H1 (cell line): ENCODE measurements at regions of chr12 and their contacts with region 1.

Region 1: GRCh38 chr12:6039894-6040568 is 84.4 kb downstream of the VWF start:
- DNase-seq: peak in 1 of 2 experiments; percentile 69
- H3K4me3 ChIP-seq: no peak overlapping the region
- H3K27ac ChIP-seq: no peak overlapping the region
- H3K4me1 ChIP-seq: peaks cover 0 to 4% (median 2%) of the 10 kb centered on the region in 4 experiments; a peak in 4 of 7 replicates
- H3K27me3 ChIP-seq: peaks cover 0 to 2% (median 0%) of the 10 kb centered on the region in 4 experiments; a peak in 2 of 7 replicates
- CTCF ChIP-seq: peak; percentile 72 to 94 (median 85)
- EP300 ChIP-seq: no peak
- POLR2A ChIP-seq: no peak
- RAD21 ChIP-seq: peak; percentile 97 to 98

Region 2: DNA sequence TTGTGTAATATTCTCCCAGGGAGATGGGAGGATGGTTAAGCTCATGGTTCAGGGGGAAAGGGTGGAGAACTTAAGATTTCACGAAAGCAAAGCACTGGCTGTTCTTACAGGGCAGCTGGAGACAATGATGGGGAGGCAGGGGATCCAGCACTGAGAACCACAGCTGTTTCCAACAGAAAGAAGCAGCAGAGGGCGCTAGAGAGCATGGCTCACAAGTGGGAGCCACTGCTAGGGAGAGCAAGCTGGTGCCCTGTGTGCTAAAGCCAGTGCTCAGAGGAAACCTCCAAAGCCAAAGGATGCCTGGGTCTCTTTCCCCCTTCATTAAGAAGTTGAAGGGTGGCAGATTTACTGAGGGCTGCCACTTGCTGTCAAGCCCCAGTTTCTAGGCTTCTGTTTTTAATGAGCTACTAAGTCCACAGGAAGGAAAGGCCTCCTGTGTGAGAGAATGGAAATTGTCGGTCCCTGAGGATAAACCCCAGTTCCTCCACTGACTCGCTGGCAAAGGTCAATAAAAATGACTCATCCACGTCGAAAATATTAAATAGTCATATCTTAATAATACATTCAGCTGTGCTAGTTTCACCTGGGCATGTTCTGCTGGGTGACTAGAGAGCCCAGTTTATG is 294.7 kb before region 1 on chr12:
- CTCF ChIA-PET with region 1: interaction called, 10 read pairs
- POLR2A ChIA-PET with region 1: no interaction called
- DNase-seq: peak; percentile 70 to 92
- H3K4me3 ChIP-seq: no peak overlapping the region
- H3K27ac ChIP-seq: no peak overlapping the region
- H3K4me1 ChIP-seq: no peaks in the 10 kb centered on the region
- H3K27me3 ChIP-seq: no peaks in the 10 kb centered on the region
- CTCF ChIP-seq: peak; percentile 81 to 93 (median 90)
- EP300 ChIP-seq: no peak
- POLR2A ChIP-seq: no peak
- RAD21 ChIP-seq: peak; percentile 77 to 87

Region 3: DNA sequence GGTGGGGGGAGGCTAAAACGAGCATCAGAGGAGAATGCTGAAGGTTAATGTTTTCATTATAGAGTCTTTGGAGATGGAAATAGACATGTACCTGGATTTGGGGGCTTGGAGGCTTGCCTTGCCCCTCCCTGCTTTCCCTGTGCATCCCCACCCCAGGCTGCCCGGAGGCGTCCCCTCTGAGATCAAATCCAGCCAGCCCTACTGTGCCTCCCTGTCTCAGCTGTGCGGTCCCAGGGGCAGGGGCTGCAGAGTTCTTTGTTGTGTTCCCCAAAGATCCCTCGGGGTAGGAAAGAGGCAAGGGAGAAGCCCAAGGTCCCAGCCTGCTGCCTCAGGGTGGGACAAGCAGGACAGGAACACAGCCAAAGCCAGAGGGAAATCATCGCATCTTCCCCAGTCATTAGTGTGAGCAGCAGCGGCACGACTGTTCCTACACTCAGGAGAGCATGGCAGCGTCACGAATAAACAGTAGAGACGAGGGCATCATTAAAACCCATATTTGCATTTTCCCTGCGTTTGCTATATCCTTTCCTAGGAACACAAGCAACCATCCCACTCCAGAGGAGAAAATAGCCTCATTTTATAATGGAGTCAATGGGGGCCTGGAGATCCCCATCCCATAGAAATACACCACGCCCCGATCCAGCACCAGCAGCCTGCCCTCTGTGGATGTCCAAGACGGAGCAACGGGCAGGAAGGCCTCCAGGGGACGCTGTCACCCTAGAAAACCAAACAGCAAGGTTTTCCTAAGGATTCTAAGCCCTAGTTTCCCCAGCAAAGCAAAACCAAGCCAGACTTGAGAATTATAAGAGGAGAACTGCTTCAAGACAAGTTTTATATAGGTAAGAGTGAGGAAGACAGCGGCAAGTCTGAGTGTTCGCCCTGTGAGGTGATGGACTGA is 127.3 kb before region 1 on chr12:
- CTCF ChIA-PET with region 1: interaction called, 44 read pairs
- POLR2A ChIA-PET with region 1: interaction called, 5 read pairs
- DNase-seq: peak; percentile 51 to 88
- H3K4me3 ChIP-seq: no peak overlapping the region
- H3K27ac ChIP-seq: no peak overlapping the region
- H3K4me1 ChIP-seq: peaks cover 0 to 2% (median 0%) of the 10 kb centered on the region in 4 experiments; a peak in 1 of 7 replicates
- H3K27me3 ChIP-seq: no peaks in the 10 kb centered on the region
- CTCF ChIP-seq: peak; percentile 95 to 97 (median 97)
- EP300 ChIP-seq: no peak
- POLR2A ChIP-seq: no peak
- RAD21 ChIP-seq: peak; percentile 97

Region 4: DNA sequence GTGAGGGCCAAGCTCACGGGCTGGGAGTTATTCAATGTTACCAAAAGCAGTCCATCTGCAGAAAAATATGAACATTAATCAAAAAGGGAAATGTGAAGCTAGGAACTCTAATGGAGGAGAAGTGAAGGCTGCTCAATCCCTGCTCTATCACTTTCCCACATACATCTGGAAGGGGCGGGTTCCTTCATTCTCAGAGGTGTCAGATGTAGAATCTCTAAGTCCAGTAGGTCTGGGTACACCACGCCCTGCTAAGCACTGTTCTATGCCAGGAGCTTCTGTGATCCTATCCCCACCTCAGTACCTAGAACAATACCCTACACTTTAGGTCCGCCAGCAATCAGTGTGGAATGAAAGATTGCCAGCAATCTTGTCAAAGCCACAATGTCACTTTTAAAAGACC is 57.9 kb before region 1 on chr12:
- CTCF ChIA-PET with region 1: interaction called, 29 read pairs
- POLR2A ChIA-PET with region 1: interaction called, 4 read pairs
- DNase-seq: no peak
- H3K4me3 ChIP-seq: no peak overlapping the region
- H3K27ac ChIP-seq: no peak overlapping the region
- H3K4me1 ChIP-seq: peaks cover 0 to 2% (median 0%) of the 10 kb centered on the region in 4 experiments; a peak in 1 of 7 replicates
- H3K27me3 ChIP-seq: no peaks in the 10 kb centered on the region
- CTCF ChIP-seq: no peak
- EP300 ChIP-seq: no peak
- POLR2A ChIP-seq: no peak
- RAD21 ChIP-seq: no peak

Region 5: DNA sequence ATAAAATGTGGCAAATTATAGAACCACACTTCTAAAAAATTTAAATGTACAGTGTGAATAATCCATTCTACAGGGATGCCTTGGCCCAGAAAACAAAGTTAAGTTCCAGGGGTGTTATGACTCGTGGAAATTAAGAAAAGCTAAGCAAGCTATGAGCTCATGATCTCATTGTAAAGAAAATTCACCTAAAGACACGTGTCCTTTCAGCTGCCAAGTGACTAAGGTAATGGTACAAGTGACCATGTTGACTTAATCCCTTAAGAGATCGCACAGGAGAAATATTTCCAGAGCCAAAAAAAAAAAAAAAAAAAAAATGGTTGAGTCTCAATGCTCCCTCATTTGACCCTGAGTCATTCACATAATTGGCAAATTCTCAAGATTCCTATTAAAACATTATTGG is 43.6 kb before region 1 on chr12:
- CTCF ChIA-PET with region 1: interaction called, 412 read pairs
- POLR2A ChIA-PET with region 1: no interaction called
- DNase-seq: no peak
- H3K4me3 ChIP-seq: no peak overlapping the region
- H3K27ac ChIP-seq: no peak overlapping the region
- H3K4me1 ChIP-seq: no peaks in the 10 kb centered on the region
- H3K27me3 ChIP-seq: no peaks in the 10 kb centered on the region; a peak in 1 of 7 replicates
- CTCF ChIP-seq: no peak
- EP300 ChIP-seq: no peak
- POLR2A ChIP-seq: no peak
- RAD21 ChIP-seq: no peak

Region 6: GRCh38 chr12:6026998-6027397 is 13.0 kb before region 1 on chr12:
- CTCF ChIA-PET with region 1: interaction called, 15 read pairs
- POLR2A ChIA-PET with region 1: interaction called, 3 read pairs
- DNase-seq: no peak
- H3K4me3 ChIP-seq: no peak overlapping the region
- H3K27ac ChIP-seq: no peak overlapping the region
- H3K4me1 ChIP-seq: no peaks in the 10 kb centered on the region
- H3K27me3 ChIP-seq: no peaks in the 10 kb centered on the region
- CTCF ChIP-seq: no peak
- EP300 ChIP-seq: no peak
- POLR2A ChIP-seq: no peak
- RAD21 ChIP-seq: no peak

Region 7: GRCh38 chr12:6278439-6279255 is 238.6 kb after region 1 on chr12:
- CTCF ChIA-PET with region 1: interaction called, 23 read pairs
- POLR2A ChIA-PET with region 1: no interaction called
- DNase-seq: peak; percentile 39 to 97
- H3K4me3 ChIP-seq: peak overlapping the region; percentile 28 to 64 (median 40)
- H3K27ac ChIP-seq: peak overlapping the region; percentile 61; the same call in 1 of the 2 replicates
- H3K4me1 ChIP-seq: peaks cover 15 to 33% (median 21%) of the 10 kb centered on the region in 4 experiments
- H3K27me3 ChIP-seq: no peaks in the 10 kb centered on the region; a peak in 1 of 7 replicates
- CTCF ChIP-seq: peak; percentile 82 to 87 (median 86)
- EP300 ChIP-seq: no peak
- POLR2A ChIP-seq: no peak
- RAD21 ChIP-seq: peak; percentile 49 to 87